ENCODE measurements at regions of chr2 and their contacts with region 1.

Region 1: DNA sequence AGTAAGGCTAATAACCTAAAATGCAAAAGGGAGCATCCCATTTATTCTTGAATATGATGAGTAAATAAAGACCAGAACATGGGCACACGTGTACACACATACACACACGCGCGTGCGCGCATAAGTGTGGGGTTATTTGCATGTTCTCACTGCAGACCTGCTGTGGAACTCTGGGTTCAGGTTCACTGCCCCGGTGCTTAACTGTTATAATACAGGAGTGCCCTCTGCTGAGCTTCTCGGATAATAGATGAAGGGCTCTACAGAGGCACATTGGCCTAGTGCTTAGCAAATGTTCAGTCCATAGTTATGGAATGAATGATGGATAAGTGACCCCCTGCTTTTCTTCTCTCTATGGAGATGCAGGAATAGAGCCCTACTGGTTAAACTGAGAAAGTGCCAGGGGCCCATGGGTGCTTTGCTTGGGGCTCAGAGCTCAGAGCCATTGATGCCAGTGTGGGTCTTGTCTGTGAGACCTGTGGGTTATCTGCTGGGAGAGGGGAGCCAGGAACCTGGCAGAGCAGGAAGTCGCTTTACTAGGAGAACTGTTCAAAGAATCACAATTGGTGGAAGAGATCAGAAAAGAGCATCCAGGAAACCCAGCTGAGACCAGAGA is 3.6 kb upstream of the ARL4C start:
- DNase-seq: peak; percentile 45 to 90 (median 76)
- ATAC-seq: peak; percentile 45
- H3K4me3 ChIP-seq: no peak overlapping the region
- H3K4me3 Mint-ChIP-seq: no peak overlapping the region
- H3K27ac ChIP-seq: no peak overlapping the region
- H3K27ac Mint-ChIP-seq: peak overlapping the region; percentile 92
- H3K4me1 ChIP-seq: peaks cover 32% of the 10 kb centered on the region
- H3K4me1 Mint-ChIP-seq: peaks cover 27% of the 10 kb centered on the region
- H3K27me3 ChIP-seq: no peaks in the 10 kb centered on the region
- H3K27me3 Mint-ChIP-seq: no peaks in the 10 kb centered on the region
- CTCF ChIP-seq: peak; percentile 77

Region 2: DNA sequence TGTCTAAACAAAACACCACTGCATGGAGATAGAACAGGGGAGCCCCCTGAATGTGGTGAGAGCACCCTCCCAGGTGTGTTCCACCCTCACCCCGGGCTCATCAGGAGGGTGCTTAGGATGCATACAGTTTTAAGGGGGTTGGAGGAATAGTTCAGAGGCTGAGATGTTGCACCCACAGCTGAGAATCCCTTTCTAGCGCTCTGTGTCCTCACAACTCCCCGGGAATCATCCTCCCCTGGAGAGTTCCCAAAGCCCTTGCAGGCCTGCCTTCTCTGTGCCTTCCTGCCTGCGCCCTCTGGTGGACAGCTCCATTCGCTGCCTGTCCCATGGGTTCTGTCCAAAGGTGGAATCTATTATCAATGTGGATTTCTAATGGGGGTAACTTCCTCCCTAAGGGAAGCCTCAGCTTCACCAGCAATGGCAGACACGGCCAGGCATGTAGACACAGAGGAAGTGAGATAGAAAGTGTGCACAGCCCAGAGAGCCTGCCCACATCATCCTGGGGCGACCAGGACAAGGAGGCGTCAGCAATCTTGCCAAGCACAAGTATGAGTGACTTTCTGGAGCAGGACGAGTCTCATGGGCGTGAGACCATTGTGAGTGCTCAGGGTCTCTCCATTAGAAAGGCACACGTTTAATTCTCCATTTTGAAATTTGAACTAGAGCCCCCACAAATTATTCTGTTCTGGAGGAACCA is 789.0 kb before region 1 on chr2:
- CTCF ChIA-PET with region 1: no interaction called
- POLR2A ChIA-PET with region 1: no interaction called
- intact Hi-C with region 1: loop called in 1 of 2 experiments (anchors 5 kb)
- DNase-seq: peak; percentile 25 to 76 (median 60)
- ATAC-seq: peak; percentile 57
- H3K4me3 ChIP-seq: no peak overlapping the region
- H3K4me3 Mint-ChIP-seq: no peak overlapping the region
- H3K27ac ChIP-seq: no peak overlapping the region
- H3K27ac Mint-ChIP-seq: no peak overlapping the region
- H3K4me1 ChIP-seq: no peaks in the 10 kb centered on the region
- H3K4me1 Mint-ChIP-seq: no peaks in the 10 kb centered on the region
- H3K27me3 ChIP-seq: no peaks in the 10 kb centered on the region
- H3K27me3 Mint-ChIP-seq: peaks cover 19% of the 10 kb centered on the region
- CTCF ChIP-seq: peak; percentile 68

Region 3: GRCh38 chr2:234135720-234136221 is 364.7 kb before region 1 on chr2:
- CTCF ChIA-PET with region 1: interaction called, 81 read pairs
- POLR2A ChIA-PET with region 1: interaction called, 7 read pairs
- intact Hi-C with region 1: loop called (anchors 1 kb)
- DNase-seq: peak; percentile 16 to 77 (median 48)
- ATAC-seq: peak; percentile 56
- H3K4me3 ChIP-seq: no peak overlapping the region
- H3K4me3 Mint-ChIP-seq: no peak overlapping the region
- H3K27ac ChIP-seq: no peak overlapping the region
- H3K27ac Mint-ChIP-seq: peak overlapping the region; percentile 64
- H3K4me1 ChIP-seq: peaks cover 25% of the 10 kb centered on the region
- H3K4me1 Mint-ChIP-seq: peaks cover 30% of the 10 kb centered on the region
- H3K27me3 ChIP-seq: no peaks in the 10 kb centered on the region
- H3K27me3 Mint-ChIP-seq: no peaks in the 10 kb centered on the region
- CTCF ChIP-seq: peak; percentile 62

Region 4: GRCh38 chr2:234420408-234420807 is 80.1 kb before region 1 on chr2:
- CTCF ChIA-PET with region 1: interaction called, 50 read pairs
- POLR2A ChIA-PET with region 1: interaction called, 45 read pairs
- intact Hi-C with region 1: loop called in 1 of 2 experiments (anchors 1 kb)
- DNase-seq: peak in 7 of 9 experiments; percentile 22 to 83 (median 64)
- ATAC-seq: peak; percentile 22
- H3K4me3 ChIP-seq: peak overlapping the region in 1 of 2 experiments; percentile 10
- H3K4me3 Mint-ChIP-seq: peak overlapping the region; percentile 22
- H3K27ac ChIP-seq: peak overlapping the region; percentile 35 to 92
- H3K27ac Mint-ChIP-seq: peak overlapping the region; percentile 100
- H3K4me1 ChIP-seq: peaks cover 57% of the 10 kb centered on the region
- H3K4me1 Mint-ChIP-seq: peaks cover 64% of the 10 kb centered on the region
- H3K27me3 ChIP-seq: no peaks in the 10 kb centered on the region
- H3K27me3 Mint-ChIP-seq: no peaks in the 10 kb centered on the region
- CTCF ChIP-seq: peak; percentile 25

Region 5: DNA sequence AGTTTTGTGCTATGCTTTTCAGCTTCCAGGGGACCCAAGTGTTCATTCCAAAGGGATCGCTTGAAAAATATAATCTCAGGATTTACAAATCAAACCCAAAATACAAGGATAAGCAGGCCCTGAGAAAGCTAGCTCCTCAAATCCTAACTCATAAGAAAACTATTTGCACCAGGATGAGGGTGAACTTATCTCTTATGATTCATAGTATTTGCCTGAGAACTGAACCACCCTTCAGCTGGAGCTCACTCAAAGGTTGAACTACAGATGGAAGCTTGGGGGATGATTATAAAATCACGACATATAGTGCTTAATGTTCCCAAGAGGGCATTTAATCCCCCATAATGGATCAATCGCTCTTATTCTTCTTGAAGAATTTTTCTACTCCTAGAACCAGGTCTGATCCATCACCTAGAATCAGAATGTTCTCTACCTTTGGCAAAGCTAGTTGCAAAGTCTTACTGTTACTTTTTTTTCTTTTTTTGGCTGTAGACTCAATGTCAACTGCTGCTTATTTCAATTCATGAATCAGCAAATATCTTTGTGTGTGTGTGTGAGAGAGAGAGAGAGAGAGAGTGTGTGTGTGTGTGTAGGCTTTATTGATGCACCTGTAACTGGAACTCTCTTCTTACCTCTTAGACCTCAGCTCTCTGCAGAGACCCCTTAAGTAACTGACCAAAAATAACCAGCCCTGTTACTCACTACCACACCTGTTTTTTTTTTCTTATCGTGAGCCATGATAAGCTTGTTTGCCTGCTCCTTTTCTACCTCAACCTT is 48.5 kb before region 1 on chr2:
- CTCF ChIA-PET with region 1: interaction called, 10 read pairs
- POLR2A ChIA-PET with region 1: interaction called, 102 read pairs
- intact Hi-C with region 1: loop called in 1 of 2 experiments (anchors 1 kb)
- DNase-seq: peak in 2 of 9 experiments; percentile 29 to 55
- ATAC-seq: peak; percentile 14
- H3K4me3 ChIP-seq: peak overlapping the region; percentile 42 to 81
- H3K4me3 Mint-ChIP-seq: peak overlapping the region; percentile 83
- H3K27ac ChIP-seq: peak overlapping the region; percentile 55 to 91
- H3K27ac Mint-ChIP-seq: peak overlapping the region; percentile 91
- H3K4me1 ChIP-seq: peaks cover 73% of the 10 kb centered on the region
- H3K4me1 Mint-ChIP-seq: peaks cover 79% of the 10 kb centered on the region
- H3K27me3 ChIP-seq: no peaks in the 10 kb centered on the region
- H3K27me3 Mint-ChIP-seq: no peaks in the 10 kb centered on the region
- CTCF ChIP-seq: no peak

Region 6: DNA sequence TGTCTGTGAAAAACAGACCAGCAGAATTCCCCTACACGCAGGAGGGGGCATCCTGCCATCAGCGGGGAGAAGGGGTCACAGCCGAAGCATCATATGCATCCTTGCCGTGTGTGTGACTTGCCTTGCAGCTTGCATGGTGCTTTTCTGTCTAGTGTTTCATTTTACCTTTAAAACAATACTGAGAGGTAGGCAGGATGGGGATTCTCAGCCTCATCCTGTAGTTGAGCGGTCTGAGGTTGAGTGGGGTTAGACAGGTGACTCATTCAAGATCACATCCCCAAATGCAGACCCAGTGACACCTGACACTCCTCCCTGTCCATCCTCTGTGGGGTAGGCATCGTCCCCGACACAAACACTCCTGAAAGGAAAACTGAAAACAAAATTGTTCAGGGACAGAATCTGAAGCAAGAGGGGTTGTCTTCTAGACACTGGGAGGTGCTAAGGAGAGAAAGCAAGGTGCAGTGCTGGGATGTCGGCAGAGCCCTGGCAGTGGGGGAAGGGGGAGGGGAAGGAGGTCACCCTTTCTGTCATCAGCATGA is 11.5 kb before region 1 on chr2:
- CTCF ChIA-PET with region 1: interaction called, 6 read pairs
- POLR2A ChIA-PET with region 1: interaction called, 5 read pairs
- intact Hi-C with region 1: loop called in 1 of 2 experiments (anchors 1 kb)
- DNase-seq: peak; percentile 43 to 95 (median 77)
- ATAC-seq: peak; percentile 76
- H3K4me3 ChIP-seq: peak overlapping the region; percentile 6 to 32
- H3K4me3 Mint-ChIP-seq: peak overlapping the region; percentile 85
- H3K27ac ChIP-seq: peak overlapping the region; percentile 70 to 89
- H3K27ac Mint-ChIP-seq: peak overlapping the region; percentile 98
- H3K4me1 ChIP-seq: peaks cover 82% of the 10 kb centered on the region
- H3K4me1 Mint-ChIP-seq: peaks cover 89% of the 10 kb centered on the region
- H3K27me3 ChIP-seq: no peaks in the 10 kb centered on the region
- H3K27me3 Mint-ChIP-seq: no peaks in the 10 kb centered on the region
- CTCF ChIP-seq: no peak

Measured in CD8-positive, alpha-beta T cell (primary cell).